Transverse colon (tissue), 4 donors: ENCODE measurements at regions of chr17 and their contacts with region 1.

Region 1: DNA sequence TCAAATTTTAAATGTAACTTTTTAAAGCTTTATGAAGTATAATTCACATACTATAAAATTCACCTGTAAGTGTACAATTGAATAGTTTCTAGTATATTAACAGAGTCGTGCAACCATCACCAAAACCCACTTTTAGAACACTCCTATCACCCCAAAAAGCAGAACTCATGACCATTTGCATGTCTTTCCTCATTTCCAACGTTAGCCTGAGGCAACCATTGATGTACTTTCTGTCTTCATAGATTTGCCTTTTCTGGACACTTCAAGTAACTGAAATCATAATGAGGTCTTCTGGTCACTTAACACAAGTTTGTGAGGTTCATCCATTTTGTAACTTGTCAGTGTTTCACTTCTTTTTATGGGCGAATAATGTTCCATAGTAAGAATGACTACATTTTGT is 33.2 kb downstream of the METTL16 start:
- DNase-seq: no peak
- H3K4me3 ChIP-seq: no peak overlapping the region
- H3K27ac ChIP-seq: no peak overlapping the region
- H3K4me1 ChIP-seq: peaks cover 3 to 12% (median 4%) of the 10 kb centered on the region in 4 donors
- H3K27me3 ChIP-seq: no peaks in the 10 kb centered on the region
- CTCF ChIP-seq: no peak
- EP300 ChIP-seq: no peak
- POLR2A ChIP-seq: no peak

Region 2: DNA sequence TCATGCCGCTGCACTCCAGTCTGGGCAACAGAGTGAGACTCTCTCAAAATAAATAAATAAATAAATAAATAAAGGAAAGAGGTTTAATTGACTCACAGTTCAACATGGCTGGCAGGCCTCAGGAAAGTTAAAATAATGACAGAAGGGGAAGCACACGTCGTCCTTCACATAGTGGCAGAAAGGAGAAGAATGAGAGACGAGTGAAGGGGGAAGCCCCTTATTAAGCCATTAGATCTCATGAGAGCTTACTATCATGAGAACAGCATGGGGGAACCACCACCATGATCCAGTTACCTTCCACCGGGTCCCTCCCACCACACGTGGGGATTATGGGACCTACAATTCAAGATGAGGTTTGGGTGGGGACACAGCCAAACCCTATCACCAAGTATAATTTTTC is 169.5 kb after region 1 on chr17:
- in situ Hi-C with region 1: no loop called
- intact Hi-C with region 1: no loop called
- DNase-seq: no peak
- H3K4me3 ChIP-seq: no peak overlapping the region
- H3K27ac ChIP-seq: no peak overlapping the region
- H3K4me1 ChIP-seq: peaks cover 0 to 7% (median 2%) of the 10 kb centered on the region in 4 donors
- H3K27me3 ChIP-seq: no peaks in the 10 kb centered on the region
- CTCF ChIP-seq: no peak
- EP300 ChIP-seq: no peak
- POLR2A ChIP-seq: no peak

Region 3: DNA sequence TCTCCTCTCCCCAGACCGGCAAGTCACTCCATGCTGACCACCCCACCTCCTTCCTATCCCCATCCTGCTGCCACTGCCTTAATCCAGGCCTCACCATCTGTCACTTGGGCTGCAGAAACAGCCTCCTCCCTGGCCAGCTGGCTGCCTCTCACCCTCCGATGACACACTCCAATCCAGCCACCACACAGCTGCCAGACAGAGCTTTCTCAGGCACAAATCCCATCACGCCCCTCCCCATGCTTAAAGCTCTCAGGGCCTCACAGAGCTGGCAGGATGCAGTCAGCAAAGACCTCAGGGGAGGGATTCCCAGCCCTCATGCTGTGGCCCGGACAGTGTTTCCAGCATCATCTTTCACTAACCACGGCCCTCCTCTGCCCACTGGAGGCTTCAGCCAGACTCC is 1400.7 kb after region 1 on chr17:
- in situ Hi-C with region 1: no loop called
- intact Hi-C with region 1: loop called (anchors 10 kb)
- DNase-seq: no peak
- H3K4me3 ChIP-seq: no peak overlapping the region
- H3K27ac ChIP-seq: peak overlapping the region in 1 of 4 donors; percentile 34
- H3K4me1 ChIP-seq: peaks cover 0 to 6% (median 0%) of the 10 kb centered on the region in 4 donors
- H3K27me3 ChIP-seq: no peaks in the 10 kb centered on the region
- CTCF ChIP-seq: no peak
- EP300 ChIP-seq: no peak
- POLR2A ChIP-seq: no peak